Breast epithelium (tissue), 4 donors: ENCODE measurements at regions of chr2 and their contacts with region 1.

Region 1: DNA sequence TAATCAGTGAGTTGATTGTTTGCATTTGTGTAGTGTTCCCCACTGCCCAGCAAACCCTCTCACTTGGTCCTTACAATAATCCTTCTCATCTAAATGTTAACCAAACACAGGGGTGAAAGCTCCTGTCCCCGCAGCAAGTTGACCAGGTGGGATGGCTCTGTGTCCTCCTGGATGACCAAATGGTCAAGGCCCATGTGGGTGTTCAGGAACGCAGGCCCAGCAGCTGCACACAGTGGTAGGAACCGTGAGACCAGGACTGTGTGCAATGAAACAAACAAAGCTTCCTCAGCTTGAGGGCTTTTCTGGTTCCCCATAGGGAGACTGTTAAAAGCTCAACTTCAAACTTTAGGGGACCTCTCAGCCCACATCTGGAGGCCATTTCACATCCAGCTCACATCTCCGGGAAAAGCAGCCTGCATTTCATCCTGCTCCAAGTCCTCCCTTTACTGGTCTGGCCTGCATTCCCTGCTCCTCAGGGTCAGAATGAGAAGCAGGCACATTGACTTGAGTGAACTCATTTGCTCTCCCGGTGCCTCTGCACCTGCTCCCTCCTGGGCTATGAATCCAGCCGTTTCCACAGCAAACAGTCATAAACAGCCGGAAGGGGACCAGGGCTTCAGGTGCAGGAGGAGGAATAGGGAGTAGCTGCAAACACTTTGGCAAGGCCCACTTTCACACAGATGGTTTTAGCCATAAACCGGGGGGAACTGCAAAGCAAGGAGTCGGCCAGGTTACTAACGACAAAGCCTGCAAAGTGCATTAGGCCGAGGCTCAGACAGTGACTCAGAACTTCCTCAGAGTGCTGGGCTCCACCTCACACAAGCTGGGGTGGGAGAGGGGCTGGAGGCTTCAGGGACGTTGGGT is 144.7 kb downstream of the CAPN13 start:
- DNase-seq: no peak
- H3K4me3 ChIP-seq: no peak overlapping the region
- H3K27ac ChIP-seq: no peak overlapping the region
- H3K4me1 ChIP-seq: no peaks in the 10 kb centered on the region
- H3K27me3 ChIP-seq: no peaks in the 10 kb centered on the region
- CTCF ChIP-seq: no peak
- POLR2A ChIP-seq: no peak

Region 2: DNA sequence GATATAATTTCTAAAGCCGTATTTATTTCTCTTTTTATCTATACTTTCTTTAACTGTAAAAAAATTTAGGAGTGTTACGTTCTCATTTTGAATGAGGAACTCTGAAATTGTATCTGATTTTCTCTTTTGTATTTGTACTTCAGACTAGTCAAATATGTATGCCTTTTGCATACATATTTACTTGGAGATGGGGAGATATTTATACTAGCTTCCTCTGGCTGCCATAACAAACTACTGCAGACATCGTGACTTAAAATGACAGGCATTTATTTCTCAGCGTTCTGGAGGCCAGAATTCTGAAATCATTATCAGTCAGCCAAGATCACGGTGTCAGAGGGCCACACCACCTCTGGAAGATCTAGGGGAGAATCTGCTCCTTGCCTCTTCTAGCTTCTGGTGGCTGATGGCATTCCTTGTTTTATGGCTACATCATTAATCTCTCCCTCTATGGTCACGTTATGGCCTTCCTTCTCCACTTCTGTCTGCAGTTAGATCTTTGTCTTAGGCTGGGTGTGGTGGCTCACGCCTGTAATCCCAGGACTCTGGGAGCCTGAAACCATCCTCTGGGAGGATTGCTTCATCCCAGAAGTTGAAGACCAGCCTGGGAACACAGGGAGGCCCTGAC is 207.3 kb before region 1 on chr2:
- intact Hi-C with region 1: no loop called
- DNase-seq: no peak
- H3K4me3 ChIP-seq: no peak overlapping the region
- H3K27ac ChIP-seq: no peak overlapping the region
- H3K4me1 ChIP-seq: no peaks in the 10 kb centered on the region
- H3K27me3 ChIP-seq: no peaks in the 10 kb centered on the region
- CTCF ChIP-seq: no peak
- POLR2A ChIP-seq: no peak

Region 3: DNA sequence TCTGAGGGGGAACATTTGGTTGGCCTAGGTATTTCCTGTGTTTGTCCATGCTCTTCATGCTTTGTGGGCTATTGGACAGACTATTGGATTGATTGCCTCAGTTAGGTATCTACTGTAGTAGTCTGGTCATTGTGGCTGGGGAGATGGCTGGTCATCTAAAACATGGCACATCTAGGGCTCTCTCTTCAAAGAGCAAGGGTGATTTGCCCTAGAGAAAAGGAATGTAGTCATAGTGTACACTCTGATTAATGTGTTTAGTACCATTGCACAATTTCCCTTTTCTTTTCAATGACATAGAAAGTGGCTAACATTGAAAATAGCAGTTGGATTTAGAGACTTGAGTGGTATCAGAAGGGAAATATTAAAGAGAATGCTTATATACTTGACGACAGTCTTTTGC is 101.2 kb before region 1 on chr2:
- intact Hi-C with region 1: no loop called
- DNase-seq: no peak
- H3K4me3 ChIP-seq: no peak overlapping the region
- H3K27ac ChIP-seq: no peak overlapping the region
- H3K4me1 ChIP-seq: no peaks in the 10 kb centered on the region
- H3K27me3 ChIP-seq: no peaks in the 10 kb centered on the region
- CTCF ChIP-seq: no peak
- POLR2A ChIP-seq: no peak

Region 4: GRCh38 chr2:30622452-30622851 is 40.0 kb before region 1 on chr2:
- intact Hi-C with region 1: no loop called
- DNase-seq: no peak
- H3K4me3 ChIP-seq: no peak overlapping the region
- H3K27ac ChIP-seq: no peak overlapping the region
- H3K4me1 ChIP-seq: no peaks in the 10 kb centered on the region
- H3K27me3 ChIP-seq: no peaks in the 10 kb centered on the region
- CTCF ChIP-seq: no peak
- POLR2A ChIP-seq: no peak

Region 5: GRCh38 chr2:30639841-30640240 is 22.7 kb before region 1 on chr2:
- intact Hi-C with region 1: loop called (anchors 2 kb)
- DNase-seq: no peak
- H3K4me3 ChIP-seq: no peak overlapping the region
- H3K27ac ChIP-seq: no peak overlapping the region
- H3K4me1 ChIP-seq: no peaks in the 10 kb centered on the region
- H3K27me3 ChIP-seq: no peaks in the 10 kb centered on the region
- CTCF ChIP-seq: no peak
- POLR2A ChIP-seq: no peak